Mammary epithelial cell (primary cell): ENCODE measurements at regions of chr15 and their contacts with region 1.

Region 1: DNA sequence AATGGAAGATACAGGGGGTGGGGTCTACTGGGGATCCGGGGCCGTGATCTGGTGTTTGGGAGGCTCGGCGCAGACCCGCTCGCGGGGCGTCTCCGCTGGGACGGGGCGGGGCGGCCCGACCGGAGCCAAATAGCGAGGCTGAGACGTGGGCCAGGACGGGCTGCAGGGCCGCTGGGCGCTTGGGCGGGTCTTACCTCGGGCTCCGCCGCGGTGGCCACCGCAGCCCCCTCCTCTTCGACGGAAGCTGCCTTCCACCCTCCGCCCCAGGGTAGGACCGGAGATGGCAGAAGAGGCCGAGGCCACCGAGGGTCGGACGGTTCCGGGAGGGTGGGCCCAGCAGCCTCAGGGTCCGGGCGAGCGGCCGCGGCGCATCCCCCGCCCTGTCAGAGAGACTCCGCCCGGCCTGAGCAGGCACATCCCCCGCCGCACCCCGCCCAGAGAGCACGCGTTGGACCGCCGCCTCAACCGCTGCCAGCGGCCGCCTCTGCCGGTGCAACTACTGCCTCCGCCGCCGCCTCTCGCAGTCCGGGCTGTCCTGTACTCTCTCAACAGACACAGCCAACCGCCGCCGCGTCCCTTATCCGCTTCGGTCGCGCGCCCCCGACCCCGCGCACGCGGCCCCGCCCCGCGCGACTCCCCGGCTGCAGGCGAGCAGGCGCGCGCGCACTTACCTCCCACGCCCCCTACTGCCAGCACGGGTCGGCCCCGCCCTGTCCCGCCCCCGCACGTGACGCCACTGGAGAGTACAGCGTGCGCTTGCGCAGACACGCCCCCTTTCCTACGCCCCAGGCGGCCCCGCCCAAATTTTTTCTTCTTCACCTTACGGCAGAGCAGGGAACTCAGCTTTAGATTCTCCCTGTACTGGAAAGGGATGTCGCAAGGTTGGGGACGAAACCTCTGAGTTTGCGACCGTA is at the start of gene MYO9A:
- DNase-seq: peak; percentile 97
- H3K4me3 ChIP-seq: peak within 1 kb of the TSS; percentile 88 to 98 (median 93)
- H3K27ac ChIP-seq: peak within 1 kb of the TSS; percentile 97
- H3K4me1 ChIP-seq: peaks cover 3% of the 10 kb centered on the region
- H3K27me3 ChIP-seq: no peaks in the 10 kb centered on the region
- CTCF ChIP-seq: no peak
- total RNA-seq, gene MYO9A: 43.2 to 55.2 TPM

Region 2: DNA sequence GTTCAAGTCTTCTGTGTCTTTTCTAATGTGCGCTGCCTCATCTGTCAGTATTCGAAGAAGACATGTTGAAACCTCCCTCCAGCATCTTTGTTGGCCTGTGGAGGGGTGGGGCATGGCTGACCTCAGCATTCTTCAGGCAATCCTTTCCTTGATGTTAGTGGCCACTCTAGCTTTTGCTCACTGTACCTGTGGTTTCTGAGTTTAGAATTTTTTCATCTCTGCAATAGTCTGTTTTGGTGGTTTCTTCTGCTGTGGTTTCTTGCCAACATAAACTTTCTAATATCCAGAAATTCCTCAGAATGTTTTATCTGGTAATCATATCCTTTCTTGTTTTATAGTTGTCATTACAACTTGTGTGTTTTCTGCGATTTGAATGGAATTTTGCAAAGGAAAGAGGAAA is 558.6 kb before region 1 on chr15:
- CTCF ChIA-PET with region 1: interaction called, 16 read pairs
- dilution Hi-C with region 1: no loop called
- in situ Hi-C with region 1: no loop called
- intact Hi-C with region 1: no loop called
- DNase-seq: peak; percentile 89
- H3K4me3 ChIP-seq: peak overlapping the region in 2 of 3 experiments; percentile 29 to 30
- H3K27ac ChIP-seq: peak overlapping the region; percentile 86
- H3K4me1 ChIP-seq: peaks cover 56% of the 10 kb centered on the region
- H3K27me3 ChIP-seq: no peaks in the 10 kb centered on the region
- CTCF ChIP-seq: no peak

Region 3: DNA sequence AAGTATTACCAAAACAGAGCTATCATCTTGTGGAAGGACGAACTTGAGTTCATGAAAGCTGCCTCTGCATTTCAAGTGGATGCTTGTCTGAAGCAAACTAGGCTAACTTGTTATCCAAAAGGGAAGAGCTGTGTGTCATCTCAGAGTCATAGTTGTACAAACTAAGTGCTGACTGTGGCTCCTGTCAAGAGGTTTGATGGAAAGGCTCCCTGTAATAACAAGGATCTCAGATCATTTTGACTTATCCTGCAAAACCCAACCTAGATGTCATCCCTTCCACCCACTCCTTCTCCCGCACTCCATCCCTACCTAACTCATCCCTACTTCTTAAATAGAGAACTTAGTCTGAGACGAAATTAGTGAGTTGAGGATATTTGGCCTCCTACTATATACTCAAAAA is 196.6 kb before region 1 on chr15:
- CTCF ChIA-PET with region 1: no interaction called
- dilution Hi-C with region 1: no loop called
- in situ Hi-C with region 1: no loop called
- intact Hi-C with region 1: loop called (anchors 10 kb)
- DNase-seq: peak; percentile 78
- H3K4me3 ChIP-seq: no peak overlapping the region
- H3K27ac ChIP-seq: no peak overlapping the region
- H3K4me1 ChIP-seq: no peaks in the 10 kb centered on the region
- H3K27me3 ChIP-seq: no peaks in the 10 kb centered on the region
- CTCF ChIP-seq: no peak

Region 4: DNA sequence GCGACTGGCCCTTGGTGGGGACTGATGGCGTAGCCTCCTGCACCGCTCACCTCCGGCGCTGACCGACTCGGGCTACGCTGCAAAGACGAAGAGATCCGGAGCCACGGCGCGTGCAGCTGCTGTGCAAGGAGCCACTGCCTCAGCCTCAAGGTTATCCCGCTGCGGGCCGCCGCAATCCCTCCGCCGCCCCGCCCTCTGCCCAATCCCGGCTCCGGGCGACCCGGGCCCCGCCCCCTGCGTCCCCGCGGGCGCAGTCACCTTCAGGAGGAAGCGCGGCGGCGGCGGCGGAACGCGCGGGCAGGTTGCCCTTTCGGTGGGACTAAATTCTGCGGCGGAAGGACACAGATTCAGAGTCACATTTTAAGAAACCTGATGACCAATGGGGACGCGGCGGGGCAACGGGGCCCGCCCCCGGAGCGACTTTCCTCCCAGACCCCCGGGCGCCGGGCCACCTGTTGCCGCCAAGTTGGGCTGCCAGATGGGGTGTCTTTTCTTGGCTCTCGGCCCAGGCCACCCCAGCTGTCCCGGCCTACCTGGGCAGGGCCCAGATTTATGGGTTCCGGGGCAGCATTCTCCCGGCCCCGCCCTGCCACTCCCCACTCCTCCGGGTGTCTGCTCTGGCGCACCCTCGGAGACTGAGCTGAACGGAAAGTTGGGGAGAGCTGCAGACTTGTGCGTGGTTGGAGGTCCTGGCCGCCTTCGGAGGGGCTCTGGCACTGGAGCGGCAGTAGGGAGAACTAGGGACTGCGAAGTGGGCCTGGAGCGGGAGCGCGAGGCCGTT is 113.5 kb after region 1 on chr15 and contains the start of gene PKM:
- CTCF ChIA-PET with region 1: no interaction called
- dilution Hi-C with region 1: no loop called
- in situ Hi-C with region 1: no loop called
- intact Hi-C with region 1: loop called (anchors 2 kb)
- DNase-seq: peak; percentile 99
- H3K4me3 ChIP-seq: peak within 1 kb of the TSS; percentile 84 to 89 (median 86)
- H3K27ac ChIP-seq: peak within 1 kb of the TSS; percentile 92
- H3K4me1 ChIP-seq: peaks cover 27% of the 10 kb centered on the region
- H3K27me3 ChIP-seq: no peaks in the 10 kb centered on the region
- CTCF ChIP-seq: no peak
- total RNA-seq, gene PKM: 2,783 to 3,063 TPM